ENCODE measurements at regions of chr12 and their contacts with region 1.

Region 1: DNA sequence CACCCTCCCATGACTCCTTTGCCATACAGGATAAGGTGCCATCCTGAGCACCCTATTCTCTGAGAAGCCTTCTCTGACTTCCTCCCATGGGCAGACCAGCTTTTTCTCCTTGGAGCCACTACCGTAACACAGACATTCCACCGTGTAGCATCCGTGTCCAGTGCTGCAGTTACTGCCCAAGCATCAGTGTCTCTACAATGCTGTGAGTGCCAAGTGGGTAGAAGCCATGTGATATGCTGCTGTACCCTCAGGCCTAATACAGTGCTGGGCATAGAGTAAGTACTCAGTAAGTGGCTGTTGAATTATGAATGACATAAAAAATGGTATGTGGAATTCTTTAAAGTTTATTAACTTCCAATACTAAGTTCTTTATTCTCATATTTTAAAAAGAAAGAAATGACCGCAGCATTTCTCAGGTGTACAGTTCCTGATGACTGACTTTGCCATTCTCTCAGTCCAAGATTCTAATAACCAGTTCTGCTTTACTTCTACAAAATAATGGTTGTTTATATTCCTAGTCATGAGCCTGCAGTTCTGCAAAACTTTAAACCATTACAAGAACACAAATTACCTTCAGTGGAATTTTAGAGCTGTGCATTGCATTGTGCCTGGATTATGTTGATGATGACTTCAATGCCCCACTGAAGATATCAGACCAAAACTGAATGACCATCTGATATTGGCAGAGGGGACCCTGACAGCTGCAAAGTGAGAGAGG is 118.7 kb downstream of the RPAP3 start:
- DNase-seq: no peak

Region 2: GRCh38 chr12:47504775-47505446 is 82.2 kb before region 1 on chr12:
- intact Hi-C with region 1: no loop called
- DNase-seq: no peak

Region 3: DNA sequence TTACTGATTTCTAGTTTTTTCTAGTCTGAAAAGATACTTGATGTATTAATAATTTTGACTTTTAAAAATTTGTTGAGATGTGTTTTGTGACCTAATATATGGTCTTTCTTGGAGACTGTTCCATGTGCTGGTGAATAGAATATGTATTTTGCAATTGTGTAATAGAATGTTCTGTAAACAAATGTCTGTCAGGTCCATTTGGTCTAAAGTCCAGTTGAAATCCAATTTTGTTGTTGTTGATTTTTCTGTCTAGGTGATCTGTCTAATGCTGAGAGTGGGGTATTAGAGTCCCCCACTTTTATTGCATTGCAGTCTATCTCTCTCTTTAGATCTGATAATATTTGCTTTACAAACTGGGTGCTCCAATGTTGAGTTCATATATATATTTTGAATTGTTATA is 57.1 kb before region 1 on chr12:
- intact Hi-C with region 1: loop called in 1 of 2 experiments (anchors 2 kb)
- DNase-seq: no peak

Measured in posterior vena cava (tissue), 2 donors.